Activated T-helper 2 cell treated with anti-CD3 and anti-CD28 coated beads, Interferon-gamma antibody, Interleukin-2, Interleukin-4, amounts not matched to agents 10 μg/mL and 5 μg/mL and 100 μg/mL, durations not matched to agents 14 hours and 24 hours and 36 hours (primary cell): ENCODE measurements at regions of chr15 and their contacts with region 1.

Region 1: GRCh38 chr15:77543159-77543882 is 89.4 kb downstream of the LINGO1 start:
- DNase-seq: peak; percentile 66
- H3K4me3 Mint-ChIP-seq: peak overlapping the region; percentile 73
- H3K27ac Mint-ChIP-seq: no peak overlapping the region
- H3K4me1 Mint-ChIP-seq: peaks cover 5% of the 10 kb centered on the region
- H3K27me3 Mint-ChIP-seq: peaks cover 9% of the 10 kb centered on the region

Region 2: GRCh38 chr15:77118882-77119321 is 424.4 kb before region 1 on chr15:
- intact Hi-C with region 1: loop called (anchors 2 kb)
- DNase-seq: no peak
- H3K4me3 Mint-ChIP-seq: no peak overlapping the region
- H3K27ac Mint-ChIP-seq: no peak overlapping the region
- H3K4me1 Mint-ChIP-seq: peaks cover 14% of the 10 kb centered on the region
- H3K27me3 Mint-ChIP-seq: no peaks in the 10 kb centered on the region

Region 3: GRCh38 chr15:77526791-77527778 is 16.2 kb before region 1 on chr15:
- intact Hi-C with region 1: no loop called
- DNase-seq: no peak
- H3K4me3 Mint-ChIP-seq: no peak overlapping the region
- H3K27ac Mint-ChIP-seq: no peak overlapping the region
- H3K4me1 Mint-ChIP-seq: no peaks in the 10 kb centered on the region
- H3K27me3 Mint-ChIP-seq: peaks cover 5% of the 10 kb centered on the region

Region 4: GRCh38 chr15:77622209-77622933 is 79.0 kb after region 1 on chr15:
- intact Hi-C with region 1: no loop called
- DNase-seq: no peak
- H3K4me3 Mint-ChIP-seq: no peak overlapping the region
- H3K27ac Mint-ChIP-seq: no peak overlapping the region
- H3K4me1 Mint-ChIP-seq: no peaks in the 10 kb centered on the region
- H3K27me3 Mint-ChIP-seq: no peaks in the 10 kb centered on the region